AG04450 (cell line): ENCODE measurements at regions of chr17 and their contacts with region 1.

Region 1: DNA sequence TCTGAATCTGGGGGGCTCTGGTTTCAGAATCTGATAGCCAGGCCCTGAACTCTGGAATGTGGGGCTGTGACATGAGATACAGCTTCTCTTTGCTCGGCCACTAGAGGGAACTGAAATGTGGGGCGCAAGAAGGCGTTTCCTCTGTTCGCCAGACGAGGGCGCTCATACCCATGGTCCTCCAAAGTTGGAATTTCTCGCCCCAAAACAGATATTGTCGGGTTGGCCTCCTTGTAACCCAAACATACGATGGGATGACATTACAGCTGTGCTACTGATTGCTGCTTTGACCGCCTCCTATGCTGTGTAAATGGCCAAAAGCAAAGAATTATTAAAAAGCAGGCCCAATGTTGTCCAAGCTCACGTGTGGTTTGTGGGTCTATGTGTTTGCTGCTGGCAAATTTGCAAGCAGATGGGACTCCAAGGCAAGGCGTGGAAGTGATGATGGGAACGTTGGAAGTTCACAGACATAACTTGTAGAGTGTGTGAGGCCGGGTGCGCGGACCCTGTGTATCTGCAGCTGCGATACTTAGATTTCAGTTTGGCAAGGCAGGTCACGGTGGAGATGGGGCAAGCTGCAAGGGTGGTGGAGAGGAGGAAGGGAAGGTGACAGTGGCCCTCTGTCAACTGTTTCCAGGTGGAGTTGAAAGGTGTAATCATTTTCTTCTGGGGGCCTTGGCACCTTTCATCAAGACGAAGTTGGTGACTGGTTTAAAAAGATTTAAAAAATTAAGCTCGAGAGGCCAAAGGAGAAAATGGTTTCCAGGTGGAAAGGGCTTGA is 13.0 kb upstream of the MSI2 start:
- DNase-seq: peak; percentile 21
- H3K4me3 ChIP-seq: no peak overlapping the region
- H3K27ac ChIP-seq: no peak overlapping the region
- H3K27me3 ChIP-seq: peaks cover 17% of the 10 kb centered on the region
- CTCF ChIP-seq: peak; percentile 100

Region 2: GRCh38 chr17:57228911-57229310 is 14.4 kb before region 1 on chr17:
- CTCF ChIA-PET with region 1: interaction called, 14 read pairs
- POLR2A ChIA-PET with region 1: no interaction called
- DNase-seq: no peak
- H3K4me3 ChIP-seq: no peak overlapping the region
- H3K27ac ChIP-seq: no peak overlapping the region
- H3K27me3 ChIP-seq: no peaks in the 10 kb centered on the region
- CTCF ChIP-seq: no peak

Region 3: GRCh38 chr17:57557834-57558681 is 314.7 kb after region 1 on chr17:
- CTCF ChIA-PET with region 1: interaction called, 36 read pairs
- POLR2A ChIA-PET with region 1: no interaction called
- DNase-seq: no peak
- H3K4me3 ChIP-seq: no peak overlapping the region
- H3K27ac ChIP-seq: peak overlapping the region; percentile 11
- H3K27me3 ChIP-seq: no peaks in the 10 kb centered on the region
- CTCF ChIP-seq: no peak

Region 4: GRCh38 chr17:57604771-57605674 is 361.7 kb after region 1 on chr17:
- CTCF ChIA-PET with region 1: interaction called, 70 read pairs
- POLR2A ChIA-PET with region 1: no interaction called
- DNase-seq: peak; percentile 18
- H3K4me3 ChIP-seq: no peak overlapping the region
- H3K27ac ChIP-seq: peak overlapping the region; percentile 24
- H3K27me3 ChIP-seq: no peaks in the 10 kb centered on the region
- CTCF ChIP-seq: 0 out of 2 replicates have a peak, but pooled peaks have one; percentile 6

Region 5: GRCh38 chr17:57678393-57678792 is 435.0 kb after region 1 on chr17:
- CTCF ChIA-PET with region 1: interaction called, 126 read pairs
- POLR2A ChIA-PET with region 1: no interaction called
- DNase-seq: no peak
- H3K4me3 ChIP-seq: no peak overlapping the region
- H3K27ac ChIP-seq: no peak overlapping the region
- H3K27me3 ChIP-seq: no peaks in the 10 kb centered on the region
- CTCF ChIP-seq: no peak

Region 6: GRCh38 chr17:57823469-57824401 is 580.4 kb after region 1 on chr17:
- CTCF ChIA-PET with region 1: interaction called, 10 read pairs
- POLR2A ChIA-PET with region 1: no interaction called
- DNase-seq: no peak
- H3K4me3 ChIP-seq: no peak overlapping the region
- H3K27ac ChIP-seq: no peak overlapping the region
- H3K27me3 ChIP-seq: peaks cover 6% of the 10 kb centered on the region
- CTCF ChIP-seq: no peak